Activated naive CD4-positive, alpha-beta T cell treated with anti-CD3 and anti-CD28 coated beads for 36 hours (primary cell): ENCODE measurements at regions of chr4 and their contacts with region 1.

Region 1: GRCh38 chr4:15117270-15117946 is 115.1 kb downstream of the CPEB2 start:
- DNase-seq: peak; percentile 13
- H3K4me3 Mint-ChIP-seq: no peak overlapping the region
- H3K27ac Mint-ChIP-seq: no peak overlapping the region
- H3K4me1 Mint-ChIP-seq: peaks cover 11% of the 10 kb centered on the region
- H3K27me3 Mint-ChIP-seq: peaks cover 24% of the 10 kb centered on the region

Region 2: GRCh38 chr4:15182600-15183220 is 65.3 kb after region 1 on chr4:
- CTCF ChIA-PET with region 1: no interaction called
- intact Hi-C with region 1: loop called (anchors 2 kb)
- DNase-seq: peak; percentile 56
- H3K4me3 Mint-ChIP-seq: no peak overlapping the region
- H3K27ac Mint-ChIP-seq: no peak overlapping the region
- H3K4me1 Mint-ChIP-seq: peaks cover 25% of the 10 kb centered on the region
- H3K27me3 Mint-ChIP-seq: no peaks in the 10 kb centered on the region

Region 3: DNA sequence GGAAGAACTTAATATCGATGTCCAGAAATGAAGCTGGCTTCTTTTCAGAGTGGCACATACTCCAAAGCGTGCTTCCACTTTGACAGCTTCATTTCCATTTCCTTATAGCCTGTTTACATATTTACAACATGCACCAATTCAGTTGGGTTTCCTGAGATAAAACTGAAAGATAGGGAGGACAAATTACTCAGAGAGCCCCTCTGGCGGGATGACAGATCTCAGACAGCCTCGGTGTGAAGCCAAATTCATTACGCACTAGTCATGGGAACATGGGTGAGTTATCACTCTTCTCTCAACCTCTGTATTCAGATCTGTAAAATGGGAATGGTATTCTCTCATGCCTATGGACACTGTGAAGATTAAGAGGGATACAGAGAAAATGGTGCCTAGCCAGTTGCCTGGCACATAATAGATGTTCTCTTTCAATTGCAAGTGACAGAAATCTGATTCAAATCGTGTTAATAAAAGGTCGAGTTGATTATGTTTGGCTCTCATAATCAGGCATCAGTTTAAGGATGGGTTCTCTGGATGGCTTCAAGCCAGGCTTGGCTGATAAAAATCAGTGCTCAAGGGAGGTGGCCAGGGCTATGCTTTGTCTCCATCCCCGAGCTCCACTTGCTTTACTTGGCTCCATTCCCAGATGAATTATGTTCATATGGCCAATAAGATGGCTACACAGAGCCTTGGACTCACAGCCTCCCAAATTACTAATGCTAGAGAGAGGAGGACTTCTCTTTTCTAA is 178.2 kb after region 1 on chr4:
- CTCF ChIA-PET with region 1: no interaction called
- intact Hi-C with region 1: no loop called
- DNase-seq: no peak
- H3K4me3 Mint-ChIP-seq: no peak overlapping the region
- H3K27ac Mint-ChIP-seq: no peak overlapping the region
- H3K4me1 Mint-ChIP-seq: no peaks in the 10 kb centered on the region
- H3K27me3 Mint-ChIP-seq: no peaks in the 10 kb centered on the region